CD4-positive, alpha-beta memory T cell (primary cell): ENCODE measurements at regions of chr11 and their contacts with region 1.

Region 1: GRCh38 chr11:128342511-128343134 is 244.7 kb downstream of the ETS1 start:
- DNase-seq: peak; percentile 61 to 92 (median 66)
- H3K4me3 ChIP-seq: peak overlapping the region in 1 of 2 donors; percentile 25
- H3K4me3 Mint-ChIP-seq: peak overlapping the region in 7 of 8 donors; percentile 64 to 90 (median 83)
- H3K27ac ChIP-seq: peak overlapping the region; percentile 85
- H3K27ac Mint-ChIP-seq: peak overlapping the region; percentile 96 to 100 (median 99)
- H3K4me1 ChIP-seq: peaks cover 87% of the 10 kb centered on the region
- H3K4me1 Mint-ChIP-seq: peaks cover 70 to 99% (median 86%) of the 10 kb centered on the region in 4 donors
- H3K27me3 ChIP-seq: no peaks in the 10 kb centered on the region
- H3K27me3 Mint-ChIP-seq: no peaks in the 10 kb centered on the region

Region 2: GRCh38 chr11:128222245-128222884 is 120.3 kb before region 1 on chr11:
- CTCF ChIA-PET with region 1: no interaction called
- POLR2A ChIA-PET with region 1: no interaction called
- intact Hi-C with region 1: no loop called
- DNase-seq: no peak
- H3K4me3 ChIP-seq: no peak overlapping the region
- H3K4me3 Mint-ChIP-seq: no peak overlapping the region
- H3K27ac ChIP-seq: no peak overlapping the region
- H3K27ac Mint-ChIP-seq: no peak overlapping the region
- H3K4me1 ChIP-seq: no peaks in the 10 kb centered on the region
- H3K4me1 Mint-ChIP-seq: peaks cover 4 to 8% (median 6%) of the 10 kb centered on the region in 4 donors
- H3K27me3 ChIP-seq: no peaks in the 10 kb centered on the region
- H3K27me3 Mint-ChIP-seq: peaks cover 2% of the 10 kb centered on the region in 2 donors

Region 3: DNA sequence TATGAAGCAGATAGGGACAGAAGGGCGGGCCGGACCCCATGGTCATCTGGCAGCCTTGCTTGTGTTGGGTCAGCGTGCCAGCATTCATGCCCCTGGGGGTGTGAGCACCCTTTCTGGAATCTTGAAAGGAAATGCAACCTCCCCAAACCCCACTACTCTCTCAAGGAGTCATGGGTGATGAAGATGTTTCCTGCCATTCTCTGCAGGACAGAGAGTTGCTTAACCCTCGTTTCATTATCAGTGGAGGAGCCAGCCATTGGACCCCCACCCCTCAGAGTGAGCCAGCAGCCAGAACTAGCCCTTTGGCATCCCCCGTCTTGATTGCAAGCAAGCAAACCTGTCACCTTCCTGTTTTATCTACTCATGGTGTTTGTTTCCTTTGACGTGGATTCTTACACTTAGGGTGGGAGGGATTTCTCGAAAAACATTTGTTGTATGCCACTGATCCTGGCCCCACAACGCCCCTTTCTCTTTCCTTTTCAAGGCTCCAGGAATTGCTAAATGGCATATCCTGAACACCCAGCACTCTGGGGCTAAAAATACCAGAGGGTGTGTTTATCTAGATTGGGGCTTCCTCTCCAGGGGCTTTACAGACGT is 13.6 kb before region 1 on chr11:
- CTCF ChIA-PET with region 1: interaction called, 19 read pairs
- POLR2A ChIA-PET with region 1: interaction called, 137 read pairs
- intact Hi-C with region 1: loop called (anchors 1 kb)
- DNase-seq: peak; percentile 64 to 77 (median 66)
- H3K4me3 ChIP-seq: peak overlapping the region in 1 of 2 donors; percentile 8
- H3K4me3 Mint-ChIP-seq: peak overlapping the region; percentile 39 to 83 (median 74)
- H3K27ac ChIP-seq: peak overlapping the region; percentile 63
- H3K27ac Mint-ChIP-seq: peak overlapping the region; percentile 87 to 99 (median 97)
- H3K4me1 ChIP-seq: peaks cover 77% of the 10 kb centered on the region
- H3K4me1 Mint-ChIP-seq: peaks cover 65 to 90% (median 73%) of the 10 kb centered on the region in 4 donors
- H3K27me3 ChIP-seq: no peaks in the 10 kb centered on the region
- H3K27me3 Mint-ChIP-seq: no peaks in the 10 kb centered on the region

Region 4: GRCh38 chr11:128365044-128365443 is 22.4 kb after region 1 on chr11:
- CTCF ChIA-PET with region 1: interaction called, 4 read pairs
- POLR2A ChIA-PET with region 1: interaction called, 19 read pairs
- intact Hi-C with region 1: no loop called
- DNase-seq: peak in 1 of 5 donors; percentile 35
- H3K4me3 ChIP-seq: no peak overlapping the region
- H3K4me3 Mint-ChIP-seq: no peak overlapping the region
- H3K27ac ChIP-seq: no peak overlapping the region
- H3K27ac Mint-ChIP-seq: peak overlapping the region in 1 of 7 donors; percentile 12
- H3K4me1 ChIP-seq: peaks cover 19% of the 10 kb centered on the region
- H3K4me1 Mint-ChIP-seq: peaks cover 21 to 45% (median 29%) of the 10 kb centered on the region in 4 donors
- H3K27me3 ChIP-seq: no peaks in the 10 kb centered on the region
- H3K27me3 Mint-ChIP-seq: no peaks in the 10 kb centered on the region

Region 5: GRCh38 chr11:128458321-128458720 is 115.7 kb after region 1 on chr11:
- CTCF ChIA-PET with region 1: interaction called, 4 read pairs
- POLR2A ChIA-PET with region 1: interaction called, 11 read pairs
- intact Hi-C with region 1: no loop called
- DNase-seq: no peak
- H3K4me3 ChIP-seq: no peak overlapping the region
- H3K4me3 Mint-ChIP-seq: no peak overlapping the region
- H3K27ac ChIP-seq: no peak overlapping the region
- H3K27ac Mint-ChIP-seq: peak overlapping the region; percentile 5 to 57 (median 23)
- H3K4me1 ChIP-seq: peaks cover 74% of the 10 kb centered on the region
- H3K4me1 Mint-ChIP-seq: peaks cover 57 to 94% (median 76%) of the 10 kb centered on the region in 4 donors
- H3K27me3 ChIP-seq: no peaks in the 10 kb centered on the region
- H3K27me3 Mint-ChIP-seq: no peaks in the 10 kb centered on the region

Region 6: GRCh38 chr11:128482512-128483191 is 140.0 kb after region 1 on chr11:
- CTCF ChIA-PET with region 1: interaction called, 3 read pairs
- POLR2A ChIA-PET with region 1: interaction called, 21 read pairs
- intact Hi-C with region 1: no loop called
- DNase-seq: peak; percentile 68 to 88 (median 72)
- H3K4me3 ChIP-seq: peak overlapping the region; percentile 27 to 47
- H3K4me3 Mint-ChIP-seq: peak overlapping the region; percentile 73 to 92 (median 81)
- H3K27ac ChIP-seq: peak overlapping the region; percentile 94
- H3K27ac Mint-ChIP-seq: peak overlapping the region; percentile 88 to 99 (median 99)
- H3K4me1 ChIP-seq: peaks cover 99% of the 10 kb centered on the region
- H3K4me1 Mint-ChIP-seq: peaks cover 86 to 98% (median 93%) of the 10 kb centered on the region in 4 donors
- H3K27me3 ChIP-seq: no peaks in the 10 kb centered on the region
- H3K27me3 Mint-ChIP-seq: no peaks in the 10 kb centered on the region